ENCODE measurements at regions of chr2 and their contacts with region 1.

Region 1: GRCh38 chr2:47386551-47386950 is 16.4 kb upstream of the MSH2 start:
- DNase-seq: no peak
- H3K4me3 ChIP-seq: no peak overlapping the region
- H3K27ac ChIP-seq: no peak overlapping the region
- H3K4me1 ChIP-seq: no peaks in the 10 kb centered on the region
- H3K27me3 ChIP-seq: no peaks in the 10 kb centered on the region
- CTCF ChIP-seq: no peak
- EP300 ChIP-seq: no peak
- POLR2A ChIP-seq: no peak

Region 2: GRCh38 chr2:47205576-47206141 is 180.9 kb before region 1 on chr2:
- intact Hi-C with region 1: no loop called
- DNase-seq: peak; percentile 45 to 78
- H3K4me3 ChIP-seq: no peak overlapping the region
- H3K27ac ChIP-seq: no peak overlapping the region
- H3K4me1 ChIP-seq: peaks cover 0 to 10% (median 3%) of the 10 kb centered on the region in 4 donors
- H3K27me3 ChIP-seq: no peaks in the 10 kb centered on the region
- CTCF ChIP-seq: no peak
- EP300 ChIP-seq: no peak
- POLR2A ChIP-seq: no peak

Region 3: GRCh38 chr2:47334356-47335136 is 52.0 kb before region 1 on chr2:
- intact Hi-C with region 1: loop called (anchors 5 kb)
- DNase-seq: no peak
- H3K4me3 ChIP-seq: no peak overlapping the region
- H3K27ac ChIP-seq: no peak overlapping the region
- H3K4me1 ChIP-seq: peaks cover 0 to 18% (median 12%) of the 10 kb centered on the region in 4 donors
- H3K27me3 ChIP-seq: no peaks in the 10 kb centered on the region
- CTCF ChIP-seq: no peak
- EP300 ChIP-seq: no peak
- POLR2A ChIP-seq: no peak

Measured in stomach (tissue), 19 donors.